ENCODE measurements at regions of chr3 and their contacts with region 1.

Region 1: DNA sequence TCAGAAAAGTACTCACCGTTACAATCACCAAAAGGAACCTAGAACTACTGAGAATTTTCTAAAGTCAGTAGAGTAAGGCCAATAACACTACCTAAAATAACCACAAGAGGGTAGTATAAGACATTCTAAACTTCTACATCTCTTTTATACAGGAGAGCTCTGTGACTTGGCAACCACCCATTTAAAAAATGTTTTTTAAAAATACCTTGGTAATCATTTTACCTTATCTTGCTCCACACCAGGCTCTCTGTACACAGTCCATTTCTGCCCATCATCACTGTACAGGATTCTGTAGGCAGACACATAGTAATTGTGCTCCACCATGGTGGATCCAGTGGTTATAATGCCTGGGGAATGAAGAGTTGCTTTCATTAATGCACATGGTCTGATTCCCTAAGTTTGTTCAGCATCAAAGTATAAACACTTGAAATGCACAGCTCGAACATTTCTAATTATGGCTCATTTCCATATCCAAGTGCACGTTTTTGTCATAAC is 54.5 kb downstream of the ST3GAL6 start:
- DNase-seq: peak; percentile 44
- CTCF ChIP-seq: peak; percentile 46

Region 2: GRCh38 chr3:98039322-98040024 is 778.1 kb before region 1 on chr3:
- in situ Hi-C with region 1: loop called (anchors 25 kb)
- DNase-seq: peak; percentile 45
- CTCF ChIP-seq: peak; percentile 82

Region 3: GRCh38 chr3:98329392-98330124 is 488.0 kb before region 1 on chr3:
- in situ Hi-C with region 1: loop called (anchors 25 kb)
- DNase-seq: peak; percentile 29
- CTCF ChIP-seq: peak; percentile 75

Region 4: GRCh38 chr3:98602078-98602678 is 215.4 kb before region 1 on chr3:
- in situ Hi-C with region 1: loop called (anchors 5 kb)
- DNase-seq: peak; percentile 51
- CTCF ChIP-seq: peak; percentile 78

Region 5: GRCh38 chr3:98994128-98994762 is 176.7 kb after region 1 on chr3:
- in situ Hi-C with region 1: loop called (anchors 10 kb)
- DNase-seq: no peak
- CTCF ChIP-seq: peak; percentile 23

Region 6: GRCh38 chr3:99172736-99173657 is 355.4 kb after region 1 on chr3:
- in situ Hi-C with region 1: loop called (anchors 25 kb)
- DNase-seq: peak; percentile 32
- CTCF ChIP-seq: peak; percentile 77

Region 7: GRCh38 chr3:99486000-99486399 is 668.4 kb after region 1 on chr3:
- in situ Hi-C with region 1: no loop called
- DNase-seq: no peak
- CTCF ChIP-seq: no peak

Region 8: DNA sequence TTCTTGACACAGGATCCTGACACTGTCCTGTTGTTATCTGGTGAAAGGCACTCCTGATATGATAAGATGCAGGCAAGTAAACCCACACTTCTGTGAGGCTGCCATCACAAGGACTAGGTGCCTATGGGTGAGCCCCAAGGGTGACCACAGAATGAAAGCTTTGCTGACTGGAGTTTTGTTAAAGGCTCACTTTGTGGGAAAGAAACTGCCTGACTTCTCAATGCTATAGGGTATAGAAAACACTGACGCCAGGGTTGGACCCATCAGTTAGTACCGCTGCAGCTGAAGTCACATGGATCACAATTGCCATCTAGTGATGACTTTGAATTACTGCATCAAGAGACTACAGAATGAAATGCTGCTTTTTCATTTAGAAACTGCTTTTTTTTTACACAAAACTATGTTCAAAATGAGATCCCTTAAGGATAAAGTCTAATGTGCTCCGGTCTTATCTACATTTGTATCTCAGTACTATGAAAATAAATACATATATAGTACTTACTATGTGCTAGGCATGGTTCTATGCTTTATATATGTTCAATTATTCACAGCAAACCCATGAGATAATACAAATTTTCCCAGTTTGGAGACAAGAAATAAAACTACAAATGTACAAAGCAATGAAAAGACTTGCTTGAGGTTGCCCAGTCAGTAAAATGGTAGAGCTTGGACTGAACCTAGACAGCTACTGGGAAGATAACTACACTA is 935.8 kb after region 1 on chr3:
- in situ Hi-C with region 1: loop called (anchors 25 kb)
- DNase-seq: peak; percentile 31
- CTCF ChIP-seq: peak; percentile 72